ENCODE measurements at regions of chr18 and their contacts with region 1.

Region 1: GRCh38 chr18:56999823-57000222 is 147.1 kb upstream of the BOD1L2 start:
- DNase-seq: no peak
- H3K4me3 ChIP-seq: no peak overlapping the region
- H3K27ac ChIP-seq: no peak overlapping the region
- H3K4me1 ChIP-seq: peaks cover under 1 to 30% (median 14%) of the 10 kb centered on the region in 4 donors
- H3K27me3 ChIP-seq: no peaks in the 10 kb centered on the region
- CTCF ChIP-seq: no peak
- EP300 ChIP-seq: no peak
- POLR2A ChIP-seq: no peak

Region 2: DNA sequence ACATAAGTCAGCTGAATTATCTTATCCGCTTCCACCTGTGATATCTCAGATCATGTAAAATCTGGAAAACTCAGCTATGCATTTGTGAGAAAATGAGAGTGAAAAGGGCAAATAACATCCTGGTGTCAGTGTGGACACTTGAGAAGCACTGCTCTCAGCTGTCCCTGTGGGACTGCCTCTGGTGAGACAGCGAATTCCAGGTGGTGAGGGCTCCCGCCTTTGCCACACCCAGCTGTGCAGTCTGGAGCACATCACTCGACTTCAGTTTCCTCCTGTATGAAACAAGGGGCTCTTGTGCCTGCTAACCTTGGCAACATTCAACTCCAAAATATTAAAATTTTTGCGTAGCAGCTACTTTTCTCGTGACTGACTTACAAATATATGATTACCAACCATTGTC is 47.8 kb before region 1 on chr18:
- in situ Hi-C with region 1: no loop called
- intact Hi-C with region 1: loop called (anchors 2 kb)
- DNase-seq: no peak
- H3K4me3 ChIP-seq: no peak overlapping the region
- H3K27ac ChIP-seq: no peak overlapping the region
- H3K4me1 ChIP-seq: no peaks in the 10 kb centered on the region
- H3K27me3 ChIP-seq: no peaks in the 10 kb centered on the region
- CTCF ChIP-seq: no peak
- EP300 ChIP-seq: no peak
- POLR2A ChIP-seq: no peak

Measured in transverse colon (tissue), 4 donors.